GM10248 (cell line): ENCODE measurements at regions of chr6 and their contacts with region 1.

Region 1: GRCh38 chr6:5471044-5471443 is 209.7 kb downstream of the FARS2 start:
- DNase-seq: peak; percentile 75
- CTCF ChIP-seq: peak; percentile 86

Region 2: GRCh38 chr6:5159148-5159547 is 311.9 kb before region 1 on chr6:
- CTCF ChIA-PET with region 1: no interaction called
- POLR2A ChIA-PET with region 1: no interaction called
- DNase-seq: no peak
- CTCF ChIP-seq: no peak

Region 3: DNA sequence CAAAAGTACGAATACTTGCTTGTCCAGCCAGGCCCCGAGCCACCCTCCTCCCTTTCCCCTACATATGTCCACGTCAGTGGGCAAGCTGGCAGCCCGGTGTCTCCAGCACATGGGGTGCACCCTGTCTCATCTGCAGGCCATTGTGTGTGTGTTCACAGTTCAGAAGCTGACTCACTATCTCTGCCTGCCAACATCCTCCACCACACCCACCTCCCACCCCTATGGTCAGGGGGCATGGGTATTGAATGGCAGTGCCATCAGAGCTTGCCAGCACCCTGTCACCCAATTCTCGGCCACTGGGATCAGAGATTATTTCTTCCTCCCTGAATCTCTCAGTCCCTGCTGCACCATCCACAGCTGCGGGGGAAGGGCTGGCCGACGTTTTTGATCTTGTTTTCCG is 14.0 kb before region 1 on chr6:
- CTCF ChIA-PET with region 1: interaction called, 30 read pairs
- POLR2A ChIA-PET with region 1: no interaction called
- DNase-seq: no peak
- CTCF ChIP-seq: no peak

Region 4: DNA sequence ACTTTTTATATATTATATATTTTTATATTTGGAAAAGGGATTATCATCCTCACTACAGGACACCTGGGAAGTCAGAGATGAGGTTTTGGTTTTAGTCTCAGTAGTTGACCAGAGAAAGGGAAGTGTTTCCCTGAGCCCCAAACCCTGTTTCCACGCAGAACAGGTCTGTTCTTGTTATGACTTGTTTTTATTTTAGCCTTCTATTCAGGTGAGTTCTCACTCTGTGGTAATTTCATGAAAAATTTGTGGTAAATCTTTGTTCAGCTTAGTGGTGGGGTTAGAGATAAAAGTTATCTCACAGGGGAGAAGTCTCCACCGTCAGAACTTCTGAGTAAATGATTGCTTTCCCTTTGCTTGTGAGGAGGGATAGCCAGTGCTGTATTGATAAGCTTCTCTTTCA is 15.2 kb after region 1 on chr6:
- CTCF ChIA-PET with region 1: interaction called, 69 read pairs
- POLR2A ChIA-PET with region 1: no interaction called
- DNase-seq: peak; percentile 50
- CTCF ChIP-seq: no peak

Region 5: DNA sequence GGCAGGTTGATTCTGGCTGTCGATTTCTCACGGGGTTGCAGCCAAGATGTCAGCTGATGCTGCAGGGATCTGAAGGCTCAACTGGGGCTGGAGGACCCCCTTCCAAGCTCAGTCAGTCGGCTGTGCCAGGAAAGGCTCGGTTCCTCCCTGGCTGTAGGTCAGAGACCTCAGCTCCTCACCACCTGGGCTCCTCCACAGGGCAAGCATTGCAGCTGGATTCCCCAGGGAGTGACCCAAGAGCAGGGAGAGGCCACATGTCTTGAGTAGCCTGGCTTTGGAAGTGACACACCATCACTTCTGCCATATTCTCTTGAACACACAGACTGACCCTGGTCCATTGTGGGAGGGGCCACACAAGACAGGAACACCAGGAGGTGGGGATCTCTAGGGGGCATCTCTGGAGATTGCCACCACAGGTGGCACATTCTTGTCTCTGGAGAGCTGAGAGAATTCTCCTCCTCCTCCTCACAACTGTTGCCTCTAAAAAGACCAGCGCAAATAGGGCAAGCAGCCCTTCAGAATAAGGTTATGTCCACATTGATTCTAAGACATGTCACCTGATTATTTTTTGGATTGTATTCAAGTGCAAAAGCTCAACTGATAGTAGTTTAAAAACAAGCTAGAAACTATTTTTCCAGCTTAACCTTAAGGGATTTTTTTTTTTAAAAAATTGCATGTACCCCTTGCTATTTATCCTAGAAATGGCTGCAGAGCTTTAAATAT is 265.1 kb after region 1 on chr6:
- CTCF ChIA-PET with region 1: no interaction called
- POLR2A ChIA-PET with region 1: no interaction called
- DNase-seq: no peak
- CTCF ChIP-seq: no peak